K562 (cell line): ENCODE measurements at regions of chr1 and their contacts with region 1.

Region 1: DNA sequence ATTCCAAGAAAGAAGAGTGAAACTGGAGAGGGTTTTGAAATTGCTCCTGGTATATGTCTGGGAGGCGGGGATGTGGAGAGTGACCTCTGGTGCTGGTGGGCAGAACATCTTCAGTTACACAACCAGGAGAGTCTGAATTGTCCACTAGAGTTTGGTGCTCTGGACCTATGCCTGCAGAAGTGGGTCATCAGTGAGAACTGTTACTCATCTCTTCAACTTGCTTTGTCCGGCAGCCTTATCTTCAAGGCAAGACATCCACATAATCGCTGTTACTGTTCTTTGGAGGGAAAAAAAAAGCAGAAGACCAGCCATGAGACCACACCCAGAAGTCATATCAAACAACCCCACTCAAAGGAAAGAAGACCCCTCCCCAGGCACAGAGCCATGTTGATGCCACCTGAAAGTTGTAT is 14.9 kb downstream of the SH2D1B start:
- DNase-seq: peak; percentile 51 to 87 (median 65)
- ATAC-seq: peak; percentile 87
- H3K4me3 ChIP-seq: no peak overlapping the region
- H3K27ac ChIP-seq: peak overlapping the region; percentile 14; the same call in 2 of the 3 replicates
- H3K4me1 ChIP-seq: peaks cover 11 to 31% of the 10 kb centered on the region in 2 experiments; a peak in 3 of 5 replicates
- H3K27me3 ChIP-seq: no peaks in the 10 kb centered on the region
- CTCF ChIP-seq: peak; percentile 59 to 71 (median 69)
- EP300 ChIP-seq: peak; percentile 71; the same call in 1 of the 2 replicates
- POLR2A ChIP-seq: no peak
- RAD21 ChIP-seq: peak; percentile 32 to 60

Region 2: GRCh38 chr1:161676958-161677689 is 719.9 kb before region 1 on chr1:
- CTCF ChIA-PET with region 1: no interaction called
- POLR2A ChIA-PET with region 1: no interaction called
- in situ Hi-C with region 1: no loop called
- intact Hi-C with region 1: no loop called
- DNase-seq: no peak
- ATAC-seq: 0 out of 3 replicates have a peak, but pooled peaks have one; percentile 43
- H3K4me3 ChIP-seq: no peak overlapping the region
- H3K27ac ChIP-seq: no peak overlapping the region
- H3K4me1 ChIP-seq: no peaks in the 10 kb centered on the region
- H3K27me3 ChIP-seq: no peaks in the 10 kb centered on the region
- CTCF ChIP-seq: no peak
- EP300 ChIP-seq: no peak
- POLR2A ChIP-seq: no peak
- RAD21 ChIP-seq: no peak

Region 3: DNA sequence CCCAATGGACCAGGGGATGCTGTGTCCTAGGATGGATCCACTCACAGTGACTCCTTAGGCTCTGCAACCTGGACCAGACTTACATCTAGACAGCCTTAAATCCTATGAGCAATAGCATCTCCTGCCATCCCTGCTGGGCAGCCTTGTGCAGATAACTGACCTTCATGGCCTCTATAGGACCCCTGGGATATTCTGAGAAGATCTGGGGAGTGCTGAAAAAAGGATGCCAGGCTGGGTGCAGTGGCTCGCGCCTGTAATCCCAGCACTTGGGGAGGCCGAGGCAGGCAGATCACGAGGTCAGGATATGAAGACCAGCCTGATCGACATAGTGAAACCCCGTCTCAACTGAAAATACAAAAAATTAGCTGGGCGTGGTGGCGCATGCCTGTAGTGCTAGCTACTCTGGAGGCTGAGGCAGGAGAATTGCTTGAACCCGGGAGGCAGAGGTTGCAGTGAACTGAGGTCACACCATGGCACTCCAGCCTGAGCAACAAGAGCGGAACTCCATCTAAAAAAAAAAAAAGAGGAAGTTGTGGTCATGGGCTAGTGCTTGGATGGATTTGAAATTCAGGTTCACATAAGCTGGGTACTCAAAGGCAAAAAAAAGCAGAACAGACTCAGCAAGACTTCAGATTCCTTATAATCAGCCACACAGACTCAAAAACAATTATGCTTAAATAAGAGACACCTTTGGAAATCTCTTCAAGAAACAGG is 25.8 kb after region 1 on chr1:
- CTCF ChIA-PET with region 1: no interaction called
- POLR2A ChIA-PET with region 1: interaction called, 4 read pairs
- in situ Hi-C with region 1: no loop called
- intact Hi-C with region 1: loop called (anchors 1 kb)
- DNase-seq: peak in 1 of 4 experiments; percentile 62
- ATAC-seq: peak; percentile 51
- H3K4me3 ChIP-seq: no peak overlapping the region
- H3K27ac ChIP-seq: no peak overlapping the region
- H3K4me1 ChIP-seq: peaks cover 23 to 43% of the 10 kb centered on the region in 2 experiments
- H3K27me3 ChIP-seq: no peaks in the 10 kb centered on the region
- CTCF ChIP-seq: no peak
- EP300 ChIP-seq: no peak
- POLR2A ChIP-seq: no peak
- RAD21 ChIP-seq: 0 out of 4 replicates have a peak, but pooled peaks of 1 of the 2 experiments have one; percentile 6